Right cardiac atrium (tissue), 5 donors: ENCODE measurements at regions of chr14 and their contacts with region 1.

Region 1: DNA sequence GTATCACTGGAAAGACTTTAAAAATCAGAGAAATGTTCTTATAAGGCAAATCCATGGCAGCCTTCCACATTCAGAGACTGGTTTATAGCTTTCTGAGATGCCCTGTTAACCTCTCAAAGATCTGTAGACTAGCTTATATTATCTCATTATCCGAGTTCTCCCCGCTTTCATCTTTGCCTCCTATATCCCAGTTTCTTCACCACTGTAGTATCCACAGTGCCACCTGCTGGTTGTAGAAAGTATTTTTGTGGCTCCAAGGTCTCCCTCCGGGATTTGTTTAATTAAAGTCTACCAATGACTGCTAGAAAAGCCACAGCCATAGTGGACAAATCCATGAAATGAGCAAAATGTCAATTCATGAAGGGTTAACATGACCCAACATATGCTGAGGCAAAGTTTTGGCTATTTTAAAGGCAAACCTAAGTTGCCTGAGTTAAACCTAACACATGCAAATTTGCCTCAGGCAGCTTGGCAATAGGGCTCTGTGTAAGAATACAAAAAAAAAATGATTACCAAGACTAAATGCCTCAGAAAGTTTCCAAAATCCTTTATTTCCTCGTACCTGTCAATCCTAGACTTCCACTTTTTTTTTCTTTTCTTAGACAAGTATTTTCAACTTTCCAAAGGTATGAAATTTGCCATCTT is 218.8 kb upstream of the BMP4 start:
- DNase-seq: peak; percentile 34 to 50 (median 49)
- ATAC-seq: peak; percentile 59 to 65
- H3K4me3 ChIP-seq: no peak overlapping the region
- H3K27ac ChIP-seq: no peak overlapping the region
- H3K4me1 ChIP-seq: no peaks in the 10 kb centered on the region
- H3K27me3 ChIP-seq: no peaks in the 10 kb centered on the region

Region 2: DNA sequence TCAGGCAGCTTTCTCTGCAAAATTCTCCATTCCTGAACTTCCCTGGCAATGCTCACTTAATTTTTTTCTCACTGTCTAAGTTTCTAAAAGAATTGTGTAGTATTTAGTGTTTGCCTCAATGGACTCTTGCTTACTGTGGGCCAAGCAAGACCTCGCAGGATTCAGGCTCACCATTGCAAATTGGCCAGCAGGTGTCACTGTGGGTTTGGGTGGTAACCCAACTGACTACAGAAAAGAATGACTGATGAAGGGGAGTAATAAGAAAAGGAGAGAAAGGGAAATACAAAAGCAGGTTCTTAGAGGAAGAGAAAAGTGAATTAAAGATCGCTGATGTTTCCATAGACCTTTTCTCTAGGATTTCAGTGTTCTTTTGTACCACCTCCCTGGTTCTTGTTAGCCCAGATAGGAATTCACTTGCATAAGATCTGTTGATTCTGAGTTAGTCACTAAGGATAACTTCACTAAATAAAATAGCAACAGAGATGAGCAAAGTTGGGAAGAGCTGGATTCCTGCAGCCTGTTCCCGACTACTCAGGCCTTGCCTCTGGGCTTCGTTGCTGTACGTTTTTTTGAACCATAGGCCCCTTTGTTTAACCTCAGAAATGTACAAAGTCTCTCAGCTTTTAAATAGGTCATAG is 635.8 kb before region 1 on chr14:
- intact Hi-C with region 1: loop called (anchors 2 to 10 kb)
- DNase-seq: peak; percentile 73 to 87 (median 83)
- ATAC-seq: peak; percentile 79 to 90
- H3K4me3 ChIP-seq: no peak overlapping the region
- H3K27ac ChIP-seq: no peak overlapping the region
- H3K4me1 ChIP-seq: peaks cover 3% of the 10 kb centered on the region
- H3K27me3 ChIP-seq: no peaks in the 10 kb centered on the region

Region 3: GRCh38 chr14:53953002-53953827 is 222.2 kb before region 1 on chr14:
- intact Hi-C with region 1: loop called in 2 of 4 experiments (anchors 10 kb)
- DNase-seq: peak; percentile 88 to 96 (median 96)
- ATAC-seq: peak; percentile 94 to 95
- H3K4me3 ChIP-seq: peak overlapping the region; percentile 84
- H3K27ac ChIP-seq: peak overlapping the region; percentile 86
- H3K4me1 ChIP-seq: no peaks in the 10 kb centered on the region
- H3K27me3 ChIP-seq: no peaks in the 10 kb centered on the region

Region 4: DNA sequence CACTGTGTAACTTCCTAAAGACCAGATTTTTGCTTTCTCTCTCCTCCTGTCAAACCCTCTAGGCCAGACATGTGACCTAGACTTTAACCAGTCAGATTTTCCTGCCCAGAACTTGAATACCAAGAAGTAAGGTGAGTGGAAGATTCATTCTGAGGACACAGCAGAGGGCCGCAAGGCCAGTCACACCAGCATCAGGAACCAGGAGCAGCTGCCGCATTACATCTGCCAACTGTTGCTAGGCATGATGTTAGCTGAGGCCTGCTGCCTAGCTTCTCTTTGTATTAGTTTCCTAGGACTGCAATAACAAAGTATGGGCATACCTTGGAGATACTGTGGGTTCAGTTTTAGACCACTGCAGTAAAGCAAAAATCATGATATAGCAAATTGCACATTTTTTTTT is 116.9 kb before region 1 on chr14:
- intact Hi-C with region 1: no loop called
- DNase-seq: no peak
- ATAC-seq: no peak
- H3K4me3 ChIP-seq: no peak overlapping the region
- H3K27ac ChIP-seq: no peak overlapping the region
- H3K4me1 ChIP-seq: no peaks in the 10 kb centered on the region
- H3K27me3 ChIP-seq: no peaks in the 10 kb centered on the region

Region 5: GRCh38 chr14:54312140-54312801 is 136.9 kb after region 1 on chr14:
- intact Hi-C with region 1: no loop called
- DNase-seq: peak in 2 of 3 donors; percentile 22 to 67
- ATAC-seq: peak; percentile 45 to 47
- H3K4me3 ChIP-seq: no peak overlapping the region
- H3K27ac ChIP-seq: no peak overlapping the region
- H3K4me1 ChIP-seq: no peaks in the 10 kb centered on the region
- H3K27me3 ChIP-seq: no peaks in the 10 kb centered on the region

Region 6: GRCh38 chr14:54329082-54329695 is 153.8 kb after region 1 on chr14:
- intact Hi-C with region 1: loop called in 1 of 4 experiments (anchors 5 kb)
- DNase-seq: peak; percentile 20 to 70 (median 55)
- ATAC-seq: peak; percentile 78 to 84
- H3K4me3 ChIP-seq: no peak overlapping the region
- H3K27ac ChIP-seq: no peak overlapping the region
- H3K4me1 ChIP-seq: no peaks in the 10 kb centered on the region
- H3K27me3 ChIP-seq: no peaks in the 10 kb centered on the region